ENCODE measurements at regions of chr2 and their contacts with region 1.

Region 1: GRCh38 chr2:122748552-122749011 is 993.1 kb downstream of the TSN start:
- DNase-seq: peak; percentile 95
- H3K4me3 ChIP-seq: no peak overlapping the region
- H3K27ac ChIP-seq: peak overlapping the region; percentile 70
- H3K4me1 ChIP-seq: peaks cover 48% of the 10 kb centered on the region
- H3K27me3 ChIP-seq: no peaks in the 10 kb centered on the region
- CTCF ChIP-seq: peak; percentile 55

Region 2: GRCh38 chr2:121897335-121897970 is 851.1 kb before region 1 on chr2:
- CTCF ChIA-PET with region 1: no interaction called
- POLR2A ChIA-PET with region 1: no interaction called
- intact Hi-C with region 1: loop called (anchors 5 kb)
- DNase-seq: peak; percentile 90
- H3K4me3 ChIP-seq: no peak overlapping the region
- H3K27ac ChIP-seq: no peak overlapping the region
- H3K4me1 ChIP-seq: peaks cover 6% of the 10 kb centered on the region
- H3K27me3 ChIP-seq: no peaks in the 10 kb centered on the region
- CTCF ChIP-seq: peak; percentile 88

Region 3: DNA sequence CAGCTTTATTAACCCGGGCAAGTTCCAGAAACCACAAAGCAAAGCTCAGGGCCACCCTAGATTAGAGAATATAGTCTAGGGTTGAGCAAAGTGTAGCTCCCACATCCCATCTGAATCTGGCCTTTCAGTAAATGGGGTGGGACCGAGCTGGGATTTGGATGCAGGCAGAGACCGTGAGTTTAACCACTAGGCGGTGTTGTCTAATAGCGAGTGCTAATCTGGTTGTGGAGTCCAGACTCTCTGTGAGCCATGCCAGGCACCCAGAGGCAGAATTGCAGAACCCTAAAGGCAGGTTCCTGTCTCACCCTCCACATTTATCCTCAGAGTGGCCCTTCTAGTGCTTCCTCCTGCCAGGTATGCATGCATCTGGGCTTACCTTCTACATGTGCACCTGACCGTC is 557.2 kb before region 1 on chr2:
- CTCF ChIA-PET with region 1: no interaction called
- POLR2A ChIA-PET with region 1: no interaction called
- intact Hi-C with region 1: loop called (anchors 2 kb)
- DNase-seq: peak; percentile 91
- H3K4me3 ChIP-seq: no peak overlapping the region
- H3K27ac ChIP-seq: peak overlapping the region; percentile 12
- H3K4me1 ChIP-seq: peaks cover 44% of the 10 kb centered on the region
- H3K27me3 ChIP-seq: no peaks in the 10 kb centered on the region
- CTCF ChIP-seq: peak; percentile 90

Region 4: GRCh38 chr2:122500316-122501105 is 248.1 kb before region 1 on chr2:
- CTCF ChIA-PET with region 1: no interaction called
- POLR2A ChIA-PET with region 1: no interaction called
- intact Hi-C with region 1: loop called (anchors 1 kb)
- DNase-seq: peak; percentile 96
- H3K4me3 ChIP-seq: peak overlapping the region; percentile 12
- H3K27ac ChIP-seq: peak overlapping the region; percentile 98
- H3K4me1 ChIP-seq: peaks cover 59% of the 10 kb centered on the region
- H3K27me3 ChIP-seq: no peaks in the 10 kb centered on the region
- CTCF ChIP-seq: no peak

Region 5: DNA sequence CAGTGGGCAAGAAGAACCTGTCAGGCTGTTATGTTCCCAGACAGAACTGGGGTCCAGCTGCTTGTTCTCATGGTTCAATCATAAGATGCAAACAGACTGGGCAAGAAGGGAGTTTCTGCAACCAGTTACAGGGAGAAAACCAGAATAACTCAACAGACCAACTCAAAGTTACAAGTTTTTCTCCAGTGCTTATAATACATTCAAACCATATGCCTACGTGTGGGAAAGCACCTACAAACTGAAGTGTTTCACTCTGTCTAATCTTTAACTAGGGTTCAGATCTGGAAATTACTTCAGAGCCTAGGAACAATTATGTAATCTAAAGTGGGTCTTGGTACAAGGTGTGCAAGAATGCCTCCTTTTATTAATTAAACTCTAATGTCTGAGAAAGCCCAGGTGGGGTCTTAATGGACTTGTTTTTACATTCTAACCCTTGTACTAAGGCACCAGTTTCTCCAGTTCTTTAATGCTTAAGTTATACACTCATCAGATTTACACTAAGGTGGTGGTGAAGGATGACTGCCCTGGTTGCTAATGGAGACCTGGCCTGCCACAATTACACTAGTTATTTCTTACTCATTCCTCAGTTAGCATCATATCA is 41.3 kb before region 1 on chr2:
- CTCF ChIA-PET with region 1: no interaction called
- POLR2A ChIA-PET with region 1: no interaction called
- intact Hi-C with region 1: no loop called
- DNase-seq: no peak
- H3K4me3 ChIP-seq: no peak overlapping the region
- H3K27ac ChIP-seq: no peak overlapping the region
- H3K4me1 ChIP-seq: no peaks in the 10 kb centered on the region
- H3K27me3 ChIP-seq: no peaks in the 10 kb centered on the region
- CTCF ChIP-seq: no peak

Region 6: DNA sequence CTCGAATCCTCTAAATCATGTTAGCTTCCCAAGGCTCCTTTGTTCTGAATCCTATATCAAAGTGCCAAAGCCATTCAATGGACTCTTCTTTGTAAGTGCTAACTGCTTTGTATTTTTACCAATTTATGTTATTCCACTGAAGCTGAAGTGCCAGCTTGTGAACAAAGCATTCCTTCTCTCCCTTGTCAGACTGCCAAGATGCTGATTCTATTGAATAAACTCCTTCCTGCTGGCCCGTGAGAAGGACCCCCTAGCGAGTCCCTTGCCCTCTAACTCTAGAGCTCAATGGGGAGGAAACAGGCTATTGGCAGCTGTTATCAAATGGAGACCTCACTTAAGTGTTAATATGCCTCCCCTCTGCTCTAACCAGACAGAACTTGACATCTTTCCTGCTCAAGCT is 178.6 kb after region 1 on chr2:
- CTCF ChIA-PET with region 1: no interaction called
- POLR2A ChIA-PET with region 1: no interaction called
- intact Hi-C with region 1: loop called (anchors 5 kb)
- DNase-seq: peak; percentile 98
- H3K4me3 ChIP-seq: no peak overlapping the region
- H3K27ac ChIP-seq: no peak overlapping the region
- H3K4me1 ChIP-seq: peaks cover 16% of the 10 kb centered on the region
- H3K27me3 ChIP-seq: peaks cover 7% of the 10 kb centered on the region
- CTCF ChIP-seq: no peak

Region 7: GRCh38 chr2:123195957-123196356 is 447.4 kb after region 1 on chr2:
- CTCF ChIA-PET with region 1: no interaction called
- POLR2A ChIA-PET with region 1: no interaction called
- intact Hi-C with region 1: no loop called
- DNase-seq: no peak
- H3K4me3 ChIP-seq: no peak overlapping the region
- H3K27ac ChIP-seq: no peak overlapping the region
- H3K4me1 ChIP-seq: no peaks in the 10 kb centered on the region
- H3K27me3 ChIP-seq: no peaks in the 10 kb centered on the region
- CTCF ChIP-seq: no peak

Measured in A673 (cell line).